Ovary (tissue), 10 donors: ENCODE measurements at regions of chr18 and their contacts with region 1.

Region 1: DNA sequence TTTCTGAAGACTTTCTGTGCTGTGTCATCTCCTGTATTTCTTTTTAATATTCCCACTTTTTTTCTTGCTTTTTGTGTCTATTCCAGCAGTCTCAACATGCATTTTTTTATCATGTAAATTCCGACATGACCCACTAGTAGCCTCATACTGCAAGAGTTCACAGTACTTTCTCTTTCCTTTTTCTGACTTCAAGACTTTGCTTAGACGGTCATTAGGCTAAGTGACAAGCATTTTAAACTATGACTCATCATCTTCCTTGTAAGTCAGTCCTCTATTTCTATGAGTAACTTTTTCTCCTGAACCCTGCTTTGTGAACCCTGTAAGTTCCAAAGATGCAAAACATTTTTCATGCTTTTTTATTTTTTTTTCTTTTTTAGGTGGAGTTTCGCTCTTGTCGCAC is 381.2 kb downstream of the TXNL1 start:
- DNase-seq: no peak
- H3K4me3 ChIP-seq: no peak overlapping the region
- H3K27ac ChIP-seq: no peak overlapping the region
- H3K4me1 ChIP-seq: no peaks in the 10 kb centered on the region
- H3K27me3 ChIP-seq: no peaks in the 10 kb centered on the region
- CTCF ChIP-seq: no peak
- EP300 ChIP-seq: no peak
- POLR2A ChIP-seq: no peak

Region 2: GRCh38 chr18:55748227-55748738 is 508.9 kb before region 1 on chr18:
- intact Hi-C with region 1: no loop called
- DNase-seq: no peak
- H3K4me3 ChIP-seq: no peak overlapping the region
- H3K27ac ChIP-seq: no peak overlapping the region
- H3K4me1 ChIP-seq: no peaks in the 10 kb centered on the region
- H3K27me3 ChIP-seq: no peaks in the 10 kb centered on the region
- CTCF ChIP-seq: no peak
- EP300 ChIP-seq: no peak
- POLR2A ChIP-seq: no peak

Region 3: DNA sequence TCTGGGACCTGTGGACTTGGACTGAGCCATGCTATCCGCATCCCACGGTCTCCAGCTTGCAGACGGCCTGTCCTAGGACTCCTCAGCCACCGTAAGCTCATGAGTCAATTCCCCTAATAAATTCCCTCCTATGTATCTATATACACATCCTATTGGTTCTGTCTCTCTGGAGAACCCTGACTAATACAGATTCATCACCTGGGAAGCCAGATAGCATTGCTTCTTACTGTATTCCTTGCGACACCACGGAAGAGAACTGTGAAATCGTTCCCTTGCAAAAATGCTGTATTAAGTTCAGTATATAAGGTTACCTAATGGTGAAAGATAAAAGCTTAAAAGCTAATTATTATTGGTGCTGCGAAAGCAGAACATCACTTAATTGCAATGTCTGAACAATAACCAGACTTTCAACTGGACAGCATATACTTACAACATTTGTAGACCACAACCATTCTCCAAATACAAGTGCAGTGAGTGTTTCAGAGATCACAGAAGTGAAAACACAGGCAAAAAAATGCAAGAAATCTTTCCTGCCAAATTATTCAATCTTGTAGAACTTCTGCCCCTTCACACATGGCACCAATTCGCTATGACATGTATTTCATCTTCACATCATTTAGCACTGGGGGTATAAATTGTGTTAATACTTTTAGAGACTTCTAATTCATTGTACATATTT is 28.3 kb after region 1 on chr18:
- intact Hi-C with region 1: loop called in 1 of 4 experiments (anchors 1 kb)
- DNase-seq: no peak
- H3K4me3 ChIP-seq: no peak overlapping the region
- H3K27ac ChIP-seq: no peak overlapping the region
- H3K4me1 ChIP-seq: no peaks in the 10 kb centered on the region
- H3K27me3 ChIP-seq: no peaks in the 10 kb centered on the region
- CTCF ChIP-seq: no peak
- EP300 ChIP-seq: no peak
- POLR2A ChIP-seq: no peak

Region 4: GRCh38 chr18:56475250-56475649 is 218.0 kb after region 1 on chr18:
- intact Hi-C with region 1: no loop called
- DNase-seq: no peak
- H3K4me3 ChIP-seq: no peak overlapping the region
- H3K27ac ChIP-seq: no peak overlapping the region
- H3K4me1 ChIP-seq: peaks cover 6% of the 10 kb centered on the region
- H3K27me3 ChIP-seq: no peaks in the 10 kb centered on the region
- CTCF ChIP-seq: no peak
- EP300 ChIP-seq: no peak
- POLR2A ChIP-seq: no peak